Esophagus muscularis mucosa (tissue), 4 donors: ENCODE measurements at regions of chr9 and their contacts with region 1.

Region 1: GRCh38 chr9:112750111-112750767 is at the start of gene SNX30:
- DNase-seq: peak; percentile 95
- H3K4me3 ChIP-seq: peak within 1 kb of the TSS; percentile 75 to 97 (median 90)
- H3K27ac ChIP-seq: peak within 1 kb of the TSS; percentile 84 to 87 (median 86)
- H3K4me1 ChIP-seq: peaks cover 26 to 52% (median 50%) of the 10 kb centered on the region in 4 donors
- H3K27me3 ChIP-seq: no peaks in the 10 kb centered on the region
- CTCF ChIP-seq: peak in 2 of 3 experiments; percentile 14 to 16
- EP300 ChIP-seq: no peak
- POLR2A ChIP-seq: peak; percentile 33
- total RNA-seq, gene SNX30: 7.1 to 10.5 (median 8.9) TPM

Region 2: GRCh38 chr9:112793213-112793810 is 43.1 kb after region 1 on chr9:
- intact Hi-C with region 1: loop called (anchors 5 kb)
- DNase-seq: no peak
- H3K4me3 ChIP-seq: no peak overlapping the region
- H3K27ac ChIP-seq: no peak overlapping the region
- H3K4me1 ChIP-seq: peaks cover 0 to 28% (median 24%) of the 10 kb centered on the region in 4 donors
- H3K27me3 ChIP-seq: no peaks in the 10 kb centered on the region
- CTCF ChIP-seq: peak; percentile 62 to 75 (median 67)
- EP300 ChIP-seq: no peak
- POLR2A ChIP-seq: no peak

Region 3: GRCh38 chr9:112819635-112820496 is 69.6 kb after region 1 on chr9:
- intact Hi-C with region 1: loop called (anchors 2 kb)
- DNase-seq: peak; percentile 75
- H3K4me3 ChIP-seq: no peak overlapping the region
- H3K27ac ChIP-seq: no peak overlapping the region
- H3K4me1 ChIP-seq: peaks cover 5 to 13% (median 8%) of the 10 kb centered on the region in 4 donors
- H3K27me3 ChIP-seq: no peaks in the 10 kb centered on the region
- CTCF ChIP-seq: peak; percentile 67 to 72 (median 69)
- EP300 ChIP-seq: no peak
- POLR2A ChIP-seq: no peak